HepG2 (cell line): ENCODE measurements at regions of chr12 and their contacts with region 1.

Region 1: DNA sequence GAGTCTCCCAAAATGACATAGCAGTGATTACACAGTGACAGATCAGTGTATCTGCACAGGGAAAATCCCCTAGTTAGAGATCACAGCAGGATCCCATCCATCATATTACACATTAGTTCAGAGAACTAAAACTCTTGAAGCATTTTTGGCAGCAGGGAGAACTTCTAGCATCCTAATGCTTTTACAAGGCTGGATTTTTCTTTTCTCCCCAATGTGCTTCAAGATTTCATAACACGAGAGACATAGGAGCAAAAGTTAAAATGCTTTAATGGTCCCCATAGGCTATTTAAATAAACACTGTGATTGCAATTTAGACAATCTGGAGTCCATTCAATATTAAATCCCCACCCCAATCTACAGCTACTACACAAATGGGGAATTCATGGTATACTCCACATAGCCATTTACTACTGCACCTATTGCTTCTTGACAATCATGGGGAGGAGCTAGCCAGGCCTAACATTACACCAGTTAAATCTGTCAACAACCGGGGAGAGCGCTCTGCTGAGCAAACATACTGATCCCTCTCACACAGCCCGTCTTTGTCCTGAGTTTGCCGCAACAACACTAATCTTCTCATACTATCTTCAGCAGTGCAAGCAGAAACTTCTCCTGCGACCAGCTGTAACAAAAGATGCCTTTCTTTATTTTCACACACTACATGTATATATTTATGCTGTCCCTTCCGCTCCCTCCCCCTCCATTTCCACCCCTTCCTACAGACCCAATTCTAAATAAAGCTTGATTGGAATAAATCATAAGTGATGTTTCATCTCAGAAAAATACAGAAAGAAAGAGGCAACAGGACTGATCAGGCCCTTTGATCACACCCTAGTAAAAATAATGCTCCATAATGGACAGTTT is 120.3 kb upstream of the SOX5 start:
- DNase-seq: peak; percentile 98
- ATAC-seq: peak; percentile 100
- H3K4me3 ChIP-seq: peak overlapping the region in 2 of 3 experiments; percentile 8 to 41; a peak in 1 of 6 replicates
- H3K27ac ChIP-seq: peak overlapping the region; percentile 92
- H3K4me1 ChIP-seq: peaks cover 75% of the 10 kb centered on the region
- H3K27me3 ChIP-seq: no peaks in the 10 kb centered on the region
- CTCF ChIP-seq: 0 out of 2 replicates have a peak, but pooled peaks have one; percentile 7
- EP300 ChIP-seq: peak; percentile 34 to 96; a peak in 2 of 4 replicates
- POLR2A ChIP-seq: peak; percentile 33 to 55; a peak in 2 of 4 replicates
- RAD21 ChIP-seq: peak; percentile 20; the same call in 1 of the 2 replicates

Region 2: GRCh38 chr12:23855813-23856212 is 214.0 kb before region 1 on chr12:
- CTCF ChIA-PET with region 1: no interaction called
- POLR2A ChIA-PET with region 1: no interaction called
- in situ Hi-C with region 1: no loop called
- intact Hi-C with region 1: no loop called
- DNase-seq: no peak
- ATAC-seq: no peak
- H3K4me3 ChIP-seq: no peak overlapping the region
- H3K27ac ChIP-seq: no peak overlapping the region
- H3K4me1 ChIP-seq: peaks cover 44% of the 10 kb centered on the region
- H3K27me3 ChIP-seq: no peaks in the 10 kb centered on the region
- CTCF ChIP-seq: no peak
- EP300 ChIP-seq: no peak
- POLR2A ChIP-seq: no peak
- RAD21 ChIP-seq: no peak

Region 3: GRCh38 chr12:24045816-24046257 is 23.9 kb before region 1 on chr12:
- CTCF ChIA-PET with region 1: no interaction called
- POLR2A ChIA-PET with region 1: interaction called, 40 read pairs
- in situ Hi-C with region 1: no loop called
- intact Hi-C with region 1: no loop called
- DNase-seq: peak; percentile 87
- ATAC-seq: peak; percentile 78
- H3K4me3 ChIP-seq: peak overlapping the region in 1 of 3 experiments; percentile 7; a peak in 1 of 6 replicates
- H3K27ac ChIP-seq: peak overlapping the region; percentile 86
- H3K4me1 ChIP-seq: peaks cover 77% of the 10 kb centered on the region
- H3K27me3 ChIP-seq: no peaks in the 10 kb centered on the region
- CTCF ChIP-seq: no peak
- EP300 ChIP-seq: peak in 1 of 2 experiments; percentile 77; a peak in 2 of 4 replicates
- POLR2A ChIP-seq: peak in 1 of 2 experiments; percentile 59; a peak in 2 of 4 replicates
- RAD21 ChIP-seq: no peak